PC-9 (cell line): ENCODE measurements at regions of chr14 and their contacts with region 1.

Region 1: GRCh38 chr14:104826189-104826860 is 25.4 kb downstream of the ZBTB42 start:
- DNase-seq: peak; percentile 56 to 87
- H3K4me3 ChIP-seq: peak overlapping the region; percentile 76
- H3K27ac ChIP-seq: no peak overlapping the region
- H3K4me1 ChIP-seq: 0 out of 2 replicates have a peak, but pooled peaks cover 7% of the 10 kb centered on the region
- H3K27me3 ChIP-seq: no peaks in the 10 kb centered on the region
- CTCF ChIP-seq: peak; percentile 72

Region 2: DNA sequence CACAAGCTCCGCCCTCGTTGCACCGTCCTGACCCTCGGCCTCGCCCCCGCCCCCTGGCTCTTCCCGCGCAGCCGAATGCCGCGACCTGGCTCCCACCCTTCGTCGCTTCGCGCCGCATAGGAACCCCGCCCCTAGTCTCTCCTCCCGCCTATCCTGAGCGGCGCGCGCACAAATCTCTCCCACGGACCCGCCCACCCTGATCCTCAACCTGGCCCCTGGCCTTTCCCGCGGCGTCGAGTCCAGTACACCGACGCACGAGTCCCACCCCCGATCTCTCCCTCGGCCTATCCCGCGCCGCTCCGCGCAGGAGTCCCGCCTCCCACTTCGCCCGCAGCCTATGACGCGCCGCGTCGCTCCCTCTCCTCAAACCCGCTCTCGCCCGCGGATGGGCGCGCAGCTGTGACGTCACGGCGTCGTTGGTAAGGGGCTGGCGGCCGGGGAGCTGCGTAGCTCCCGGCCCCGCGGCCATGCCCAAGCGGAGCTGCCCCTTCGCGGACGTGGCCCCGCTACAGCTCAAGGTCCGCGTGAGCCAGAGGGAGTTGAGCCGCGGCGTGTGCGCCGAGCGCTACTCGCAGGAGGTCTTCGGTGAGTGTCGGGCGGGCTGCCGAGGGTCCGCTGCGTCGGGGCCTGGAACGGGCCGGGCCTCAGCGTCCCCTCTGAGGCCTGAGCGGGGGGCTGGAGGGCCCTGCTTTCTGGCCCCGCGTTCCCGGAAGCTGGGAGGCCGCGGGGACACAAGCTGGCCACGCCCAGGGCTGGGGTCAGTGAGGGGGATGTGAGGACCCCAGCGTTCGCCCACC is 73.4 kb before region 1 on chr14 and contains the start of gene SIVA1:
- CTCF ChIA-PET with region 1: no interaction called
- POLR2A ChIA-PET with region 1: no interaction called
- intact Hi-C with region 1: no loop called
- DNase-seq: peak; percentile 95 to 97
- H3K4me3 ChIP-seq: peak within 1 kb of the TSS; percentile 65
- H3K27ac ChIP-seq: 0 out of 2 replicates have a peak within 1 kb of the TSS, but pooled peaks have one; percentile 7
- H3K4me1 ChIP-seq: peaks cover 28% of the 10 kb centered on the region
- H3K27me3 ChIP-seq: no peaks in the 10 kb centered on the region
- CTCF ChIP-seq: no peak
- total RNA-seq, gene SIVA1: 85.8 and 116 TPM in 2 replicates

Region 3: DNA sequence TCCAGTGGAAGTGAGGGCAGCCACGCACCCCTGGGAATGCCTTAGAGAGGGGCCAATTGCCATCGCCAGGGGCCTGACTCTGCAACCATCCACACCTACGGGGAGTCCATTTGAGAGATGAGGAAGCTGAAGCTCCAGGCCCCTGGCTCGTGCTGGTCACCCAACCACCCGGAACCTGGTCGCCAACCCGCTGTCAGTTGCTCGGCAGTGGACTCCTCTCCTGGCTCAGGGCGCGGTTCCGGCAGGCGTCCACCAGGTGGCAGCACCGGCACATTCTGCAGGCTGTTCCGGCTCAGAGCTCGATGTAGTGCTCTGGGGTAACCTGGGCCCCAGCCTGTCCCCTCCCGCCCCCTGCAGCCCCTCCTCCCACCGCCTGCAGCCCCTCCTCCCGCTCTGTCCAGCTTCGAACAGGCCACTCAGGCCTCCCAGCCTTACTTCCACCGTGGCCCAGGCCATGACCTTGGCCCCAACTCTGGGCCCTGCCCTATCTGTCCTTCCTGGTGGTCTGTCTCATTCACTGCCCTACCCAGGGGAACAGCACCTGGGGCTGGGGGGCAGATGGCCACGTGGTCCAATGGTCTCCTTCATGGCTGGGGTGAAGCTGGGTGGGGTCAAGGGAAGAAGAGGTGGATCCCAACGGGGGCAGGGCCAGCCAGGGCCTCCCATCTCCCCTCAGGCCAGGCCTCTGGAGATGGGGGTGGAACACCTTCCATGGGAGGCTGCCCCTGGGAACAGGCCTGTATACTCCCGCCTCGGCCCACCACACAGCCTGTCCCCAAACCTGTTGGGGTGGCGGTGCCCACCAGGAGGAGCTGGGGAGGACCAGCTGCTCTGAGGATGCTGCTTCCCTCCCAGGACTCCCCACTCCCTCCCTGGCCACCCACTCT is 57.6 kb before region 1 on chr14:
- CTCF ChIA-PET with region 1: interaction called, 5 read pairs
- POLR2A ChIA-PET with region 1: no interaction called
- intact Hi-C with region 1: loop called (anchors 1 kb)
- DNase-seq: peak; percentile 64 to 82
- H3K4me3 ChIP-seq: no peak overlapping the region
- H3K27ac ChIP-seq: no peak overlapping the region
- H3K4me1 ChIP-seq: peaks cover 3% of the 10 kb centered on the region; the same call in 1 of the 2 replicates
- H3K27me3 ChIP-seq: no peaks in the 10 kb centered on the region
- CTCF ChIP-seq: peak; percentile 81

Region 4: GRCh38 chr14:104865644-104866441 is 39.5 kb after region 1 on chr14:
- CTCF ChIA-PET with region 1: no interaction called
- POLR2A ChIA-PET with region 1: interaction called, 10 read pairs
- intact Hi-C with region 1: no loop called
- DNase-seq: peak; percentile 54 to 70
- H3K4me3 ChIP-seq: peak overlapping the region; percentile 95
- H3K27ac ChIP-seq: peak overlapping the region; percentile 54
- H3K4me1 ChIP-seq: peaks cover 11% of the 10 kb centered on the region
- H3K27me3 ChIP-seq: no peaks in the 10 kb centered on the region
- CTCF ChIP-seq: no peak

Region 5: GRCh38 chr14:104882325-104883115 is 56.2 kb after region 1 on chr14:
- CTCF ChIA-PET with region 1: no interaction called
- POLR2A ChIA-PET with region 1: no interaction called
- intact Hi-C with region 1: no loop called
- DNase-seq: peak; percentile 81 to 86
- H3K4me3 ChIP-seq: no peak overlapping the region
- H3K27ac ChIP-seq: no peak overlapping the region
- H3K4me1 ChIP-seq: peaks cover 7% of the 10 kb centered on the region
- H3K27me3 ChIP-seq: no peaks in the 10 kb centered on the region
- CTCF ChIP-seq: no peak